Heart right ventricle (tissue), 16 donors: ENCODE measurements at regions of chr11 and their contacts with region 1.

Region 1: DNA sequence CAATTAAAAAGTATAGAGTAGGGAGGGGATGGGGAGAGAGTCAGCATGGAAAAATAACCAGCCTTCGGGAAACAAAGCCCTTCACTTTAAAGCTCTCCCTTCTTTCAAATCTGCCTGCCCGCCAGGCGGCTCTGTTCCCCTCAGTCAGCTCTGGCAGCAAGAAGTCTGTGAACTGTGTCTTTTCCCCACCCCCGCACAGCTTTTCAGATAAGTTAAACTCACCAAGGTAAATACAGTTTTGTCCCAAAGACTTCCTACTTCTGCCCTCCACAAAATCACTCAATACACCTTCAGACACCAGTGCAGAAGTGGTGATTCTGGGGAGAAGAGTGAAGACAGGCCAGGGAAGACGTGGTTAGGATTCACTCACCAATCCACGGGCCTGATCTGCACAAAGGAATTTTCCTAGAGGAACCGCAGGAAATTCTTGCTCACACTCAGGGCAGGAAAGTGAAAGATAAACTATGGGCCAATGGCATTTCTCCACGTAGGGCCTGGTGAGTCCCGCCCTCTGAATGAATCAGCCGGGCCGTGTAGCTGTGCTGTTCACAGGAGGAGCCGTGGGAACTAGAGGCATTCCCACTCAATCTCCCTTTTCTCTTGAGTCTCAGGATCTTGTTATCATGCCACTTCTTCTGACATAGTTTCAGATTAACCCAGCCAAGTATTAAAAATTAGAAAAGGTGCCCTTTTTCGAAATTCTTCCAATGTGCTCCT is at the start of gene TRIM5:
- DNase-seq: peak; percentile 76 to 93
- ATAC-seq: peak; percentile 97 to 99 (median 98)
- H3K4me3 ChIP-seq: peak within 1 kb of the TSS; percentile 0 to 68 (median 54)
- H3K27ac ChIP-seq: peak within 1 kb of the TSS; percentile 59 to 94 (median 86)
- H3K4me1 ChIP-seq: peaks cover 3 to 39% (median 19%) of the 10 kb centered on the region in 9 donors
- H3K27me3 ChIP-seq: no peaks in the 10 kb centered on the region
- CTCF ChIP-seq: peak; percentile 21 to 79 (median 53)
- total RNA-seq, gene TRIM5: 3.1 to 12.6 (median 7.8) TPM

Region 2: DNA sequence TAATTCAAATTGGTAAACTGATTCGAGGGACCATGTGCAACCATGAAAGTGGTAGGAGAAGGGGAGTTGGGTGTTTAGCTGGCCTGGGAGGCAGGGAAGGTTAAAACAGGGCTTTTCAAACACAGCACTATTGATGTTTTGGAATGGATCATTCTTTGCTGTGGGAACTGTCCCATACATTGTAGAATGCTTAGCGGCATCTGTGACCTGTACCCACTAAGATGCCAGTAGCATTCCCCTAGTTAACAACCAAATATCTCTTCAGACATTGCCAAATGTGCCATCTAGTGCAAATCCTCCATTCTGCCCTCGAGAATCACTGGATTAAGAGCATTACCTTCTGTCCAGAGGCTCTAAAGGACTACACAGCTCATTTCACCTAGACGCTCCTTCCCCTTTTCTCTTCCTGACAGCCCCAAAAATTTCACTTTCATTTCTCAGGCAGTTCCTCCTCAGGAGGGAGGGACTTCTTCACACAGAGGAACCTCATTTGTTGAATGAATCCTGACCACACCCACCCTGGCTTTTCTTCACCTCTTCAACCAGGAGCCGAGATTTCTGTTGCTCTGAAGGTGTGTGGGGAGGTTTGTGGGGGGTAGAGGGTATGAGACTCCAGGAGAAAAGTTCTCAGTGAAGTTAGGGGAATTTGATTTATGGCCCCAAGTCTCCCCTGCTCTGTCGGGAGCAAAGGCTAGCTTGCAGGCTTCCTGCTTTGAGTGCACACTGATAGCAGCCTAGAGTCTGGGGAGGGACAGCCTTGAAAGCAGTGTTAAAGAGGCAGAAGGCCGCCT is 60.1 kb before region 1 on chr11 and contains the start of gene TRIM34:
- intact Hi-C with region 1: loop called in 3 of 10 experiments (anchors 2 to 10 kb)
- DNase-seq: peak in 1 of 2 donors; percentile 65
- ATAC-seq: peak; percentile 85 to 96 (median 94)
- H3K4me3 ChIP-seq: peak within 1 kb of the TSS; percentile 35 to 66 (median 58)
- H3K27ac ChIP-seq: peak within 1 kb of the TSS; percentile 1 to 90 (median 78)
- H3K4me1 ChIP-seq: peaks cover 0 to 42% (median 25%) of the 10 kb centered on the region in 9 donors
- H3K27me3 ChIP-seq: no peaks in the 10 kb centered on the region
- CTCF ChIP-seq: no peak
- total RNA-seq, gene TRIM34: 0.66 to 6.5 (median 2.0) TPM